ENCODE measurements at regions of chrX and their contacts with region 1.

Region 1: DNA sequence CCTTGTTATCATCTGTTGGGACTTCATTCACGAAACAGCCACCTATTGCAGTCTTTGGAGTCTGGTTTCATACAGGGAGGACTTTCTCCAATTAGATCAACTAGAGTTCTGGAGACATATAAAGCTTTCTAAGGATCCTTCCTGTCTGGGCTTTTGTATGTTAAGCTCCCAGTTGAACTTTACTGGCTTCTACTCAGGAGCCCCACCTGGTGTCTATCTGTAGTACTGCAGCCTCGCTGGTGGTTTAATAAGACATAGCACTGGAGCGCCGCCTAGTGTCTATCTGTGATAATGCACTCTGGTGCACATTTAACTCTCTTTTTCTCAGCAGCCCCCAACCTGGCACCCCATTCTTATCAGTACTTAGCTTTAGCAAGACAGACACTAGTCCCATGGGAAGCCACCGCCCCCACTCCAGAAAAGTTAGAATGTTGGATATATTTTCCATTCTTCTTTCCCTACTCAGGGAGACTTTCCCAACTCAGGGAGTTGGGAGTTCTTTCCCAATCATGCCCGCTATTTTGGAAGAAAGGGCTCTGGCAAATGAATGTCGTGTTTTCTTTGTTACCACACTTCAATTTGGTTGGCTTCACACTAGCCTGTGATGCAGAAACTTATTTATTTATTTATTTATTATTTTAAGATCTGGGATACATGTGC is 36.9 kb upstream of the SYTL4 start:
- DNase-seq: no peak
- H3K4me3 ChIP-seq: no peak overlapping the region
- H3K27ac ChIP-seq: no peak overlapping the region
- H3K4me1 ChIP-seq: no peaks in the 10 kb centered on the region
- H3K27me3 ChIP-seq: no peaks in the 10 kb centered on the region
- CTCF ChIP-seq: peak; percentile 88 to 99 (median 99)
- POLR2A ChIP-seq: no peak

Region 2: GRCh38 chrX:100685284-100685996 is 83.4 kb before region 1 on chrX:
- intact Hi-C with region 1: loop called (anchors 5 kb)
- DNase-seq: no peak
- H3K4me3 ChIP-seq: no peak overlapping the region
- H3K27ac ChIP-seq: peak overlapping the region; percentile 26
- H3K4me1 ChIP-seq: peaks cover 5% of the 10 kb centered on the region
- H3K27me3 ChIP-seq: no peaks in the 10 kb centered on the region
- CTCF ChIP-seq: peak; percentile 40 to 88 (median 84)
- POLR2A ChIP-seq: no peak

Measured in vagina (tissue), 2 donors.